CD8-positive, alpha-beta T cell (primary cell): ENCODE measurements at regions of chr1 and their contacts with region 1.

Region 1: DNA sequence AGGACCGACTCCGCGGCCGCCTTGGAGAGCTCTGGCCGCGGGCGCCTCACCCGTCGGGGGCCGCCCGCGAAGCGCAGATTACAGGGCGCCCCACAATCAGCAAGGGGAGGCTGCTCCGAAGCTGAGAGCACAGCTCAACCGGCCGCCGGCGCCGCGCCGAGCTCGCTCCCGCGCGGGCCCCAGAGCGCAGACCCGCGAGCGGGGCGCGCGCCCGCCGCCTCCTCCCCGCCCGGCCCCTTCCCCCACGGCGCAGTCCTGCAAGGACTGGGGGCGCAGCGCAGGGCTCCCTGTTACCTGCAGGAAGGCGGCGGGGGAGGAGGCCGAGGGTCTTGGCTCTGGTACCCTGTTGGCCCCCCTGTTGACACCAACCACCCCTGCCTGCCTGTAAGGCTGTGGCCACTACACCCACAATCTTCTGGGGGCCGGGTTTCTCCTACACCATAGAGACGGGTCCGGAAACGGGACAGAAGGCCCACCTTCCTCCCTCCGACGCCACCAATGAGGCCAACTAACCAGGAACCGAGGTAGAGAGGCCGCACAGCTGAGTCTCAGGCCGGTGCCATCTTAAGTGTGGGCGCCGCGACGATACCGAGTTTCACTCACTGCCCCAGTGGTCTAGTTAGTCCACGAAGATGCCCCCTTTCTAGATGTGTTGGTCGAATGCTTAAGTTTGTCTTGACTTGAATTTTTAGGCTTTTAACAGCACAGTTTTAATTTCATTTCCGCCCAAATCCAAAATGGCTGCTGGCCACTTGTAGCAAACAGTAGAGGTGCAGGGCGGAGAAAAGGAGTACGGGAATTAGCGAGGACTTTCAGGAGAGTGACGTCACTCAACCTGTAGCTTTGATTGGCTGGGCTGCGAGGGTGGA is at the start of gene SCYL3:
- DNase-seq: peak; percentile 75 to 97 (median 89)
- ATAC-seq: peak; percentile 83
- H3K4me3 ChIP-seq: peak within 1 kb of the TSS; percentile 80 to 82
- H3K4me3 Mint-ChIP-seq: peak within 1 kb of the TSS; percentile 89
- H3K27ac ChIP-seq: peak within 1 kb of the TSS; percentile 98 to 99
- H3K27ac Mint-ChIP-seq: peak within 1 kb of the TSS; percentile 99
- H3K4me1 ChIP-seq: peaks cover 35% of the 10 kb centered on the region
- H3K4me1 Mint-ChIP-seq: peaks cover 46% of the 10 kb centered on the region
- H3K27me3 ChIP-seq: no peaks in the 10 kb centered on the region
- H3K27me3 Mint-ChIP-seq: no peaks in the 10 kb centered on the region
- CTCF ChIP-seq: no peak
- total RNA-seq, gene SCYL3: 3.3 to 3.7 TPM

Region 2: GRCh38 chr1:168178638-168179437 is 1714.9 kb before region 1 on chr1 and contains the start of gene TIPRL:
- CTCF ChIA-PET with region 1: no interaction called
- POLR2A ChIA-PET with region 1: no interaction called
- intact Hi-C with region 1: loop called in 1 of 2 experiments (anchors 10 kb)
- DNase-seq: peak; percentile 84 to 97 (median 93)
- ATAC-seq: peak; percentile 86
- H3K4me3 ChIP-seq: peak within 1 kb of the TSS; percentile 98 to 100
- H3K4me3 Mint-ChIP-seq: no peak within 1 kb of the TSS
- H3K27ac ChIP-seq: peak within 1 kb of the TSS; percentile 95 to 97
- H3K27ac Mint-ChIP-seq: no peak within 1 kb of the TSS
- H3K4me1 ChIP-seq: peaks cover 15% of the 10 kb centered on the region
- H3K4me1 Mint-ChIP-seq: peaks cover 12% of the 10 kb centered on the region
- H3K27me3 ChIP-seq: no peaks in the 10 kb centered on the region
- H3K27me3 Mint-ChIP-seq: peaks cover 7% of the 10 kb centered on the region
- CTCF ChIP-seq: peak; percentile 49
- total RNA-seq, gene TIPRL: 15.0 to 18.3 TPM

Region 3: GRCh38 chr1:169485544-169486278 is 408.0 kb before region 1 on chr1 and contains the start of gene SLC19A2:
- CTCF ChIA-PET with region 1: no interaction called
- POLR2A ChIA-PET with region 1: no interaction called
- intact Hi-C with region 1: loop called (anchors 2 kb)
- DNase-seq: peak; percentile 84 to 97 (median 93)
- ATAC-seq: peak; percentile 98
- H3K4me3 ChIP-seq: peak within 1 kb of the TSS; percentile 69 to 79
- H3K4me3 Mint-ChIP-seq: peak within 1 kb of the TSS; percentile 97
- H3K27ac ChIP-seq: peak within 1 kb of the TSS; percentile 73 to 79
- H3K27ac Mint-ChIP-seq: peak within 1 kb of the TSS; percentile 95
- H3K4me1 ChIP-seq: peaks cover 20% of the 10 kb centered on the region
- H3K4me1 Mint-ChIP-seq: peaks cover 43% of the 10 kb centered on the region
- H3K27me3 ChIP-seq: no peaks in the 10 kb centered on the region
- H3K27me3 Mint-ChIP-seq: no peaks in the 10 kb centered on the region
- CTCF ChIP-seq: no peak
- total RNA-seq, gene SLC19A2: 4.7 to 6.1 TPM

Region 4: GRCh38 chr1:169794530-169795416 is 99.0 kb before region 1 on chr1 and contains the start of gene METTL18:
- CTCF ChIA-PET with region 1: interaction called, 3 read pairs
- POLR2A ChIA-PET with region 1: interaction called, 22 read pairs
- intact Hi-C with region 1: loop called (anchors 1 kb)
- DNase-seq: peak; percentile 86 to 96 (median 91)
- ATAC-seq: peak; percentile 96
- H3K4me3 ChIP-seq: peak within 1 kb of the TSS; percentile 77 to 81
- H3K4me3 Mint-ChIP-seq: peak within 1 kb of the TSS; percentile 100
- H3K27ac ChIP-seq: peak within 1 kb of the TSS; percentile 78 to 95
- H3K27ac Mint-ChIP-seq: peak within 1 kb of the TSS; percentile 100
- H3K4me1 ChIP-seq: peaks cover 22% of the 10 kb centered on the region
- H3K4me1 Mint-ChIP-seq: peaks cover 48% of the 10 kb centered on the region
- H3K27me3 ChIP-seq: no peaks in the 10 kb centered on the region
- H3K27me3 Mint-ChIP-seq: no peaks in the 10 kb centered on the region
- CTCF ChIP-seq: peak; percentile 34
- total RNA-seq, gene METTL18: 2.2 to 3.7 TPM

Region 5: DNA sequence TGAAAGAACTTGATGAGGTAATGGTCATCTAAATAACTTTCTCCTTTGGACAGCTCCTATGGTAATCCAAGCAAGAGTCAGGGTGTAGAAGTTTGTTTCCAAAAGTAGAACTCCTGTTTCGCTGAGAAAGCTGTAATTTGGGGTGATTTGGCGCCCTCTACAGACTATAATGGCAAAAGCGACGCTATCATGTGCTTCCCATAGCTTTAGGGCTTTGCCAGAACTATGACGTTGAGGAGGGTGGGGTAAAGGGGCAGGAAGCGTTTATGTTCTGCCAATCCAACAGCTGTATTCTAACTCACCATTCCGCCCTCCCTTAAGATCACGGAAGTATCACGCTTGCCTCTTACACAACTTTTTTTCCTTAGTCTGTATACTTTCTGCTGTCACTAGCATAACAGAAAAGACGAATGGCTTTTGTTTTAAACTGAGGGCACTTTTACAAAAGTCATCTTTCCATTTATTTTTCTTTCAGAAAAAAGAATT is 1420.2 kb after region 1 on chr1 and contains the start of gene FMO4:
- CTCF ChIA-PET with region 1: no interaction called
- POLR2A ChIA-PET with region 1: no interaction called
- intact Hi-C with region 1: loop called in 1 of 2 experiments (anchors 10 kb)
- DNase-seq: peak; percentile 62 to 97 (median 79)
- ATAC-seq: peak; percentile 100
- H3K4me3 ChIP-seq: peak within 1 kb of the TSS; percentile 11 to 30
- H3K4me3 Mint-ChIP-seq: peak within 1 kb of the TSS; percentile 80
- H3K27ac ChIP-seq: peak within 1 kb of the TSS; percentile 41 to 48
- H3K27ac Mint-ChIP-seq: peak within 1 kb of the TSS; percentile 92
- H3K4me1 ChIP-seq: peaks cover 7% of the 10 kb centered on the region
- H3K4me1 Mint-ChIP-seq: peaks cover 21% of the 10 kb centered on the region
- H3K27me3 ChIP-seq: no peaks in the 10 kb centered on the region
- H3K27me3 Mint-ChIP-seq: no peaks in the 10 kb centered on the region
- CTCF ChIP-seq: peak; percentile 74
- total RNA-seq, gene FMO4: 0.87 to 1.0 TPM

Region 6: GRCh38 chr1:171781176-171781875 is 1887.6 kb after region 1 on chr1 and contains the start of gene METTL13:
- CTCF ChIA-PET with region 1: no interaction called
- POLR2A ChIA-PET with region 1: no interaction called
- intact Hi-C with region 1: loop called (anchors 2 to 5 kb)
- DNase-seq: peak; percentile 96 to 99 (median 98)
- ATAC-seq: peak; percentile 90
- H3K4me3 ChIP-seq: peak within 1 kb of the TSS; percentile 89 to 92
- H3K4me3 Mint-ChIP-seq: peak within 1 kb of the TSS; percentile 95
- H3K27ac ChIP-seq: peak within 1 kb of the TSS; percentile 75 to 89
- H3K27ac Mint-ChIP-seq: peak within 1 kb of the TSS; percentile 96
- H3K4me1 ChIP-seq: peaks cover 33% of the 10 kb centered on the region
- H3K4me1 Mint-ChIP-seq: peaks cover 54% of the 10 kb centered on the region
- H3K27me3 ChIP-seq: no peaks in the 10 kb centered on the region
- H3K27me3 Mint-ChIP-seq: no peaks in the 10 kb centered on the region
- CTCF ChIP-seq: no peak
- total RNA-seq, gene METTL13: 6.6 to 6.9 TPM